Heart left ventricle (tissue), 16 donors: ENCODE measurements at regions of chr2 and their contacts with region 1.

Region 1: GRCh38 chr2:54455563-54456361 is at the start of gene SPTBN1:
- DNase-seq: peak; percentile 94 to 95 (median 95)
- ATAC-seq: peak; percentile 91 to 94 (median 94)
- H3K4me3 ChIP-seq: peak within 1 kb of the TSS; percentile 72 to 98 (median 84)
- H3K27ac ChIP-seq: peak within 1 kb of the TSS; percentile 92 to 99 (median 97)
- H3K4me1 ChIP-seq: peaks cover 7 to 43% (median 30%) of the 10 kb centered on the region in 12 donors
- H3K27me3 ChIP-seq: peaks cover 0 to 39% (median 0%) of the 10 kb centered on the region in 9 donors
- CTCF ChIP-seq: peak in 3 of 12 donors; percentile 6 to 20 (median 15)
- POLR2A ChIP-seq: peak in 1 of 2 donors; percentile 63
- total RNA-seq, gene SPTBN1: 378 to 659 (median 424) TPM

Region 2: DNA sequence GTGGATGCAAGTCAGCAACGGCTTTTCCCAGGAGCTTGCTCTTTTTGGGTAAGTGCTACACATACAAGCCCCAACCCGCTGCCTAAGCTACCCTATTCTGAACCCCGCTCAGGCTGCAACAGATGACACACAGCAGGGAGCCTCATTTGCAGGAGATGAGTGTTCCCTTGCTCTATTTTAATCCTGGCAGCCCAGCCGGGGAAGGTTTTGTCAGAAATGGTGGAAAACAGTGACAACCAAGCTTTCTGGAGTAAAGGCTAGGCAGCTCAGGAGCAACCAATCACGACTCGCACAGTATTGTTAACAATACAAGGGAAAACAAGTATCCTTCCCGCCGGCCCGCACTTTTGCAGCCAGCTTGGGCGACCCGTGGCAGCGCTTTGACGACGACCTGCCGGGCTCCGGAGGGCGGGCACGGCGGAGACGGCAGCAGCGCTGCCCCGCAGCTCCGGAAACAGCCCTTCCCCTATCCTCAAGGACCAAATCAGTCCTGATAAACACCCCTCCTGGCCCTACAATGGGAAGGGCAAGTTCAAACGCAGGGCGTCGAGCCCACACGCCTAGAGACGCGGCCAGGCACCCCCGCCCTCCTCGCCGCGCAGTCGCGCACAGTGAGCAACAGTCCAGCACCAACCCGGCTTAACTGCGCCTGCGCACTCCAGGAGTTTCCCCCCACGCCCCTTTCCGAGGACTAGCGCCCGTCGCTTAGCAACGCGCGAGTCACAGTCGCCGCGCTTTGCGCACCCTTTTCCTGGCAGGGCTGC is 125.4 kb before region 1 on chr2:
- intact Hi-C with region 1: loop called in 1 of 10 experiments (anchors 5 kb)
- DNase-seq: peak; percentile 97 to 99 (median 98)
- ATAC-seq: peak; percentile 97 to 99 (median 98)
- H3K4me3 ChIP-seq: peak overlapping the region; percentile 34 to 70 (median 59)
- H3K27ac ChIP-seq: peak overlapping the region; percentile 87 to 96 (median 92)
- H3K4me1 ChIP-seq: peaks cover 3 to 29% (median 13%) of the 10 kb centered on the region in 12 donors
- H3K27me3 ChIP-seq: no peaks in the 10 kb centered on the region
- CTCF ChIP-seq: no peak
- POLR2A ChIP-seq: peak; percentile 78 to 93

Region 3: GRCh38 chr2:54348646-54349045 is 107.1 kb before region 1 on chr2:
- intact Hi-C with region 1: loop called in 5 of 10 experiments (anchors 5 kb)
- DNase-seq: peak in 4 of 5 donors; percentile 58 to 69 (median 58)
- ATAC-seq: peak; percentile 74 to 89 (median 86)
- H3K4me3 ChIP-seq: no peak overlapping the region
- H3K27ac ChIP-seq: peak overlapping the region in 6 of 12 donors; percentile 0 to 63 (median 20)
- H3K4me1 ChIP-seq: peaks cover 0 to 21% (median 2%) of the 10 kb centered on the region in 12 donors
- H3K27me3 ChIP-seq: no peaks in the 10 kb centered on the region
- CTCF ChIP-seq: no peak
- POLR2A ChIP-seq: no peak

Region 4: DNA sequence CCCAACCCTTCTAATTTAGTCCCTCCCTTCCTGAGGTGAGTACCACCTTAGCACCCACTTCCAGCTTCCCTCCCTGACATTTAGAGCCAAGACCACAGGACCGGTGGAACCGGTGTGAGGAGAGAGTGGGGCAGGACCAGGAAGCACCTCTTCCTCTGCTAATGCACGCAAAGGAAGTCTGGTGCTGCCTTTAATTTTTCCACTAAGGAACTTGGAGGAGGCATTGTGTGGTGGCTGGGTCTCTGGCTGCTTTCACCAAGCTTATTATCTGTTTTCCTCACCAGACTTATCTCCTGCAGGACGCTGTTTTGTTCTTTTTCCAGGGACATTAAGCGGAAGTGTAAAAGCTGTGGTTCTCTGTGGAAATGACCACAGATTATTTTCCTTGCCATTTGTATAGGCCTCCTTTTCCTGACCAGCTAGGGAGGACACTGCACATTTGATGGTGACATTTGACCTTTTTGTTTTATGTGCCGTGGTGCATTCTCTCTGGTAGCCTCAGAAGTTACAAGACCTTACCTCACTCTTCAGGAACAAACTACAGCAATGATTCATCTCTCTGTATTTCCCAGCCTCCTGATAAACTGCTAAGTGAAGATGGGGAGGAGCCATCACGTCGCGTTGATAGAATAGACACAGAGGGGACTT is 39.5 kb before region 1 on chr2:
- intact Hi-C with region 1: loop called in 4 of 10 experiments (anchors 5 kb)
- DNase-seq: peak in 3 of 5 donors; percentile 43 to 60 (median 60)
- ATAC-seq: peak; percentile 72 to 90 (median 82)
- H3K4me3 ChIP-seq: no peak overlapping the region
- H3K27ac ChIP-seq: peak overlapping the region; percentile 65 to 88 (median 72)
- H3K4me1 ChIP-seq: peaks cover 0 to 58% (median 45%) of the 10 kb centered on the region in 12 donors
- H3K27me3 ChIP-seq: no peaks in the 10 kb centered on the region
- CTCF ChIP-seq: no peak
- POLR2A ChIP-seq: no peak

Region 5: GRCh38 chr2:54497763-54498680 is 42.3 kb after region 1 on chr2:
- intact Hi-C with region 1: loop called in 3 of 10 experiments (anchors 5 kb)
- DNase-seq: peak in 3 of 5 donors; percentile 50 to 64 (median 52)
- ATAC-seq: peak in 3 of 4 donors; percentile 59 to 73 (median 70)
- H3K4me3 ChIP-seq: no peak overlapping the region
- H3K27ac ChIP-seq: peak overlapping the region in 11 of 12 donors; percentile 2 to 61 (median 53)
- H3K4me1 ChIP-seq: peaks cover 34 to 100% (median 83%) of the 10 kb centered on the region in 12 donors
- H3K27me3 ChIP-seq: no peaks in the 10 kb centered on the region
- CTCF ChIP-seq: peak; percentile 20 to 67 (median 46)
- POLR2A ChIP-seq: no peak

Region 6: DNA sequence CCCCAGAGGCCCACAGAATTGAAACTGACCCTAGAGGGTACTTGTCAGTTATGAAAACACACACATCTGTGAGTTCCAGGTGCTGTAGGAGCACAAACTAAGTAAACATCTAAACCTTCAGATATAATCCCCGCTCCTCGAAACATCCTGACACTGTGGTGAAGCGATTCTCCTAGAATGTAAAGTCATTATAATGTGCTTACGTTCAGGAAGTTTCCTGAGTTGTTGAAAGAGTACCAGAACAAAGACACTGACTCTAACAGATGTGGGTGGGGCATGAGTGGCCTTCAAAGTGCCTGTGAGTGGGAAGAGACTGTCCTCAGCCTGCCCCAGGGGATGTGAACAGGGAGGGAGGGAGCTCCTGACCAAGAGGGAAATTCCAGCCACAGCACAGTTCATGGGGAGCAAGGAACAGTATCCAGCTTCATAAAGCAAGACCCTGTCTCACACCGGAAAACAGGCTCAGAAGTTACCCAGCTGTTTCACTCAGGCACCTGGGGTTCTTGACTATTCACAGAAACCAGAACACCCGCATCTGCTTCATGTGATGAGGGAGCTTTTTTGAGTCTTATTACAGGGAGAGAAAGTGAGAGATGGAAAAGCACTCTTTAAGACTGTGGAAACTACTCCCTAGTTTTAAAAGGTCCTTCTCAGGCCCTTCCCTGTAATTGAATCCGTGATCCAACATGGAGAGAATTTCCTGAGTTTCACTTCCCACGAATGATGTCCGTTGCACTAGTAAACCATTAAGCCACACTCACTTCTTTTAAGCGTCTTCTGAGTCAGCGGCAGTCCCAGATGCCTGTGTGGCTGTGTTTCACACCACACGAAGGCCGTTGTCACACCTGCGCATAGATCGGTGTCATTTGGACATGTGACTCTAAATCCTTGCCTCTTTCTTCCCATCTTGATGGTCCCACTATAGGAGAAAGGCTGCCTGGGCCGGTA is 179.1 kb after region 1 on chr2:
- intact Hi-C with region 1: loop called in 2 of 10 experiments (anchors 5 to 10 kb)
- DNase-seq: peak in 4 of 5 donors; percentile 79 to 87 (median 84)
- ATAC-seq: peak; percentile 66 to 86 (median 76)
- H3K4me3 ChIP-seq: peak overlapping the region in 5 of 12 donors; percentile 12 to 37 (median 20)
- H3K27ac ChIP-seq: peak overlapping the region; percentile 54 to 94 (median 86)
- H3K4me1 ChIP-seq: peaks cover 31 to 100% (median 97%) of the 10 kb centered on the region in 12 donors
- H3K27me3 ChIP-seq: no peaks in the 10 kb centered on the region
- CTCF ChIP-seq: no peak
- POLR2A ChIP-seq: no peak